H1 (cell line): ENCODE measurements at regions of chr9 and their contacts with region 1.

Region 1: GRCh38 chr9:131608493-131609037 is 63.2 kb downstream of the PRRT1B start:
- DNase-seq: peak; percentile 63 to 72
- H3K4me3 ChIP-seq: no peak overlapping the region
- H3K27ac ChIP-seq: peak overlapping the region; percentile 74
- H3K4me1 ChIP-seq: peaks cover 11 to 24% (median 20%) of the 10 kb centered on the region in 4 experiments
- H3K27me3 ChIP-seq: no peaks in the 10 kb centered on the region
- CTCF ChIP-seq: no peak
- EP300 ChIP-seq: peak in 1 of 2 experiments; percentile 67; a peak in 1 of 3 replicates
- POLR2A ChIP-seq: peak in 1 of 2 experiments; percentile 64; a peak in 2 of 3 replicates
- RAD21 ChIP-seq: no peak; a peak in 3 of 4 replicates

Region 2: GRCh38 chr9:131621551-131622358 is 13.2 kb after region 1 on chr9:
- CTCF ChIA-PET with region 1: interaction called, 5 read pairs
- POLR2A ChIA-PET with region 1: interaction called, 16 read pairs
- DNase-seq: no peak
- H3K4me3 ChIP-seq: no peak overlapping the region
- H3K27ac ChIP-seq: no peak overlapping the region
- H3K4me1 ChIP-seq: peaks cover 0 to 6% (median 1%) of the 10 kb centered on the region in 4 experiments; a peak in 2 of 7 replicates
- H3K27me3 ChIP-seq: no peaks in the 10 kb centered on the region
- CTCF ChIP-seq: no peak
- EP300 ChIP-seq: no peak
- POLR2A ChIP-seq: no peak
- RAD21 ChIP-seq: no peak